CD8-positive, alpha-beta T cell (primary cell): ENCODE measurements at regions of chr11 and their contacts with region 1.

Region 1: GRCh38 chr11:97247601-97248000 is 857.8 kb downstream of the JRKL start:
- DNase-seq: no peak
- ATAC-seq: no peak
- H3K4me3 ChIP-seq: no peak overlapping the region
- H3K4me3 Mint-ChIP-seq: no peak overlapping the region
- H3K27ac ChIP-seq: no peak overlapping the region
- H3K27ac Mint-ChIP-seq: no peak overlapping the region
- H3K4me1 ChIP-seq: no peaks in the 10 kb centered on the region
- H3K4me1 Mint-ChIP-seq: no peaks in the 10 kb centered on the region
- H3K27me3 ChIP-seq: no peaks in the 10 kb centered on the region
- H3K27me3 Mint-ChIP-seq: no peaks in the 10 kb centered on the region
- CTCF ChIP-seq: no peak

Region 2: DNA sequence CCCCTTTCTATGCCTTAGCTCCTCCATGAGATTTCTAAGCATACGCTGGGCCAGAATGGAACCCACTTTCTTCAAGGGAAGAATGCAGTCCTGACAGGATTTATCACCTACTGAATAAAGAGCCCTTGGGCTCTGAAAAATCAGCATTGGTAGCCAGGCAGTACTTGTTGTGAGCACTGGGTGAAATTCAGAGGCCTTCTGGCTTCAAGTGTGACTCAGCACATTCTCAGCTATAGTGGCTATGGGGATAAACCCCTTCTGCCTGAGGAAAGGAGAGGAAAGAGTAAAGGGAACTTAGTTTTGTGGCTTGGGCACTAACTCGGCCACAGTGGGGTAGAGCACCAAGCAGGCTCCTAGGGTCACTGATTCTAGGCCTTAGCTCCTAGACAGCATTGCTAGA is 282.9 kb before region 1 on chr11:
- CTCF ChIA-PET with region 1: no interaction called
- POLR2A ChIA-PET with region 1: no interaction called
- intact Hi-C with region 1: no loop called
- DNase-seq: no peak
- ATAC-seq: no peak
- H3K4me3 ChIP-seq: no peak overlapping the region
- H3K4me3 Mint-ChIP-seq: no peak overlapping the region
- H3K27ac ChIP-seq: no peak overlapping the region
- H3K27ac Mint-ChIP-seq: no peak overlapping the region
- H3K4me1 ChIP-seq: no peaks in the 10 kb centered on the region
- H3K4me1 Mint-ChIP-seq: no peaks in the 10 kb centered on the region
- H3K27me3 ChIP-seq: no peaks in the 10 kb centered on the region
- H3K27me3 Mint-ChIP-seq: no peaks in the 10 kb centered on the region
- CTCF ChIP-seq: no peak

Region 3: GRCh38 chr11:97231231-97231630 is 16.4 kb before region 1 on chr11:
- CTCF ChIA-PET with region 1: no interaction called
- POLR2A ChIA-PET with region 1: no interaction called
- intact Hi-C with region 1: no loop called
- DNase-seq: no peak
- ATAC-seq: no peak
- H3K4me3 ChIP-seq: no peak overlapping the region
- H3K4me3 Mint-ChIP-seq: no peak overlapping the region
- H3K27ac ChIP-seq: no peak overlapping the region
- H3K27ac Mint-ChIP-seq: no peak overlapping the region
- H3K4me1 ChIP-seq: no peaks in the 10 kb centered on the region
- H3K4me1 Mint-ChIP-seq: no peaks in the 10 kb centered on the region
- H3K27me3 ChIP-seq: no peaks in the 10 kb centered on the region
- H3K27me3 Mint-ChIP-seq: no peaks in the 10 kb centered on the region
- CTCF ChIP-seq: no peak

Region 4: DNA sequence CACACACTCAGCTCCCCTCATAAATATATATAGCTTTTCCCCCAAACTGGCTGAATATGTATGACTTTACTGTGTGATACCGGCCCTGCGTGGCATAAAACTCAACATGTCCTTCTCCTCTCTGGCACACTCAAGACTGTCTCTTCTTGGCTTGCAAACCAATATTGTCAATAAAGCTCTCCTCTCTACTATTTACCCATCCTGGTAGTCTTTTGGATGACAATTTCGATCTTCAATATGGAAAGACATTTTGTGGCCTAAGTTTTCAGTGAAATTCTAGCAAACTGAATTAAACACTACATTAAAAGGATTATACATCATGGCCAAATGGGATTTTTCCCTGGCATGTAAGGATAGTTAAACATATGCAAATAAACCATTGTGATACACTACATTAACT is 398.1 kb after region 1 on chr11:
- CTCF ChIA-PET with region 1: no interaction called
- POLR2A ChIA-PET with region 1: no interaction called
- intact Hi-C with region 1: loop called in 1 of 2 experiments (anchors 10 kb)
- DNase-seq: no peak
- ATAC-seq: no peak
- H3K4me3 ChIP-seq: no peak overlapping the region
- H3K4me3 Mint-ChIP-seq: no peak overlapping the region
- H3K27ac ChIP-seq: no peak overlapping the region
- H3K27ac Mint-ChIP-seq: no peak overlapping the region
- H3K4me1 ChIP-seq: no peaks in the 10 kb centered on the region
- H3K4me1 Mint-ChIP-seq: no peaks in the 10 kb centered on the region
- H3K27me3 ChIP-seq: no peaks in the 10 kb centered on the region
- H3K27me3 Mint-ChIP-seq: no peaks in the 10 kb centered on the region
- CTCF ChIP-seq: no peak